H1 (cell line): ENCODE measurements at regions of chr11 and their contacts with region 1.

Region 1: DNA sequence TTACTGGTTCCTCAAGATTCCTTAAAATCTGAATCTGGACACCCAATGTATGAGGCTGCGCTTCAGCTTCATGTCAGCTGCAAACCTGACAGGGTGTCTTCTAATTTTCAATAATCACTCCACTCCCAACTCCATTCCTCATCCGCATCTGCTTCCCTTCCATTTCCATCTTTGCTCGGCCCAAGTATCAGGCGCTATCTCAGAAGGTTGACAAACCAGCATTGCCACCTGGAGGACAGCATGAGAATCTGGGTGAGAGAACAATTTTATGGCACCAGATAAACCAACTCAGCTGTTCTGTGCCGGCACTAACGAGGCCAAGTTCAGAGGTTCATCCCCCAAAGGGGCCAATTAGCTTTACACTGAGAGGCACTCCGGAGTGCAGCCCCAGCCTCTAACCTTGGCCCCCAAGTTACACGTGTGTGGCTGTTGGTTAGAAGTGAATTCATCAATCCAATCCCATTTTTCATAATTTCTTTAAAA is 79.1 kb upstream of the LMO2 start:
- DNase-seq: peak in 1 of 2 experiments; percentile 53
- H3K4me3 ChIP-seq: no peak overlapping the region
- H3K27ac ChIP-seq: no peak overlapping the region
- H3K4me1 ChIP-seq: no peaks in the 10 kb centered on the region
- H3K27me3 ChIP-seq: no peaks in the 10 kb centered on the region
- CTCF ChIP-seq: peak; percentile 31 to 94 (median 80)
- EP300 ChIP-seq: no peak
- POLR2A ChIP-seq: no peak
- RAD21 ChIP-seq: peak; percentile 96 to 97

Region 2: GRCh38 chr11:33808228-33808828 is 162.7 kb before region 1 on chr11:
- CTCF ChIA-PET with region 1: interaction called, 29 read pairs
- POLR2A ChIA-PET with region 1: no interaction called
- DNase-seq: peak; percentile 80 to 99
- H3K4me3 ChIP-seq: no peak overlapping the region
- H3K27ac ChIP-seq: no peak overlapping the region
- H3K4me1 ChIP-seq: no peaks in the 10 kb centered on the region
- H3K27me3 ChIP-seq: no peaks in the 10 kb centered on the region
- CTCF ChIP-seq: peak; percentile 84 to 89 (median 85)
- EP300 ChIP-seq: no peak
- POLR2A ChIP-seq: no peak
- RAD21 ChIP-seq: peak; percentile 91 to 92

Region 3: DNA sequence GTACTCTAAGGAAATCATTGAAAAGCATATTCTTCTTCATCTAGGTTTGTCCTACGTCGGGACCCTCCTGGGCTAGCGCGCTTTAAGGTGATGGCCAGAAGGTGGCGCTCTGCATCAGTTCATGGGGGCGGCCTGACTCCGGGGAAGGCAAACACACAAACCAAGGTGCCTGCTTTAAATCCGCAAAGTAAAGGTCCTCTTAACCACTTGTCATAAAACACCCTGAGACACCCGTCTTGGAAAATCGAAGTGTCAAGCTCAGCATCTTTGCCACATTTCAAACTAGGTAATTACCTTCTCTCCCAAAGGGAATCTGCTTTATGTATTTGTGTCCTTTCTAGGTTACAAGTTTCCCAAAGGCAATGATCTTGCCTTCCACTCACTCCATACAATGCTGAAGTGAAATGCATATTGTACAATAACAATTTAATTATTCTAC is 113.1 kb before region 1 on chr11:
- CTCF ChIA-PET with region 1: interaction called, 326 read pairs
- POLR2A ChIA-PET with region 1: no interaction called
- DNase-seq: peak; percentile 59 to 92
- H3K4me3 ChIP-seq: no peak overlapping the region
- H3K27ac ChIP-seq: no peak overlapping the region
- H3K4me1 ChIP-seq: peaks cover 0 to 4% (median under 1%) of the 10 kb centered on the region in 4 experiments; a peak in 2 of 7 replicates
- H3K27me3 ChIP-seq: peaks cover 0 to 3% (median 0%) of the 10 kb centered on the region in 4 experiments; a peak in 1 of 7 replicates
- CTCF ChIP-seq: peak; percentile 91 to 96 (median 91)
- EP300 ChIP-seq: no peak
- POLR2A ChIP-seq: no peak
- RAD21 ChIP-seq: peak; percentile 98

Region 4: DNA sequence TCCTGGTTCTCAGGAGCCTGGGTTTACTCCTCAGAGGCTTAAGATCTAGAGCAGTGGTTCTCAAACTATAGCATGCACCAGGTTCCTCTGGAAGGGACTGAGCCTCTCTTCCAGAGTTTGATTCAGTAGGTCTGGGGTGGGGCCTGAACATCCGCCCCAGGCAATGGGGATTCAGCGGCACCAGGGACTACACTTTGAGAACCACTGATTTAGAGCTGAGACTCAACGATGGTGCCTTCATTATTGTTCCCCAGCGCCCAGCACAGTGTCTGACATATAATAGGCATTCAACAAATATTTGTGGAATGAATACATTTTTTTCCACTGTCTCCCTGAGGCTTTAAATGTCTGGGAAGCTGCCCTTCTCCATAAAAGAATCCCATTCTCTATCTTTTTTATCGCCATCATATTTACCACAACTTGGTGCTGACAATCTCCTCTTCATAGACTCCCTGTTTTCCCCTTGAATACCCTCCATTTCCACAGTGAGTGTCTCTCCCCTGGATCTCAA is 55.6 kb before region 1 on chr11:
- CTCF ChIA-PET with region 1: no interaction called
- POLR2A ChIA-PET with region 1: no interaction called
- DNase-seq: no peak
- H3K4me3 ChIP-seq: no peak overlapping the region
- H3K27ac ChIP-seq: no peak overlapping the region
- H3K4me1 ChIP-seq: peaks cover 0 to 5% (median 0%) of the 10 kb centered on the region in 4 experiments; a peak in 1 of 7 replicates
- H3K27me3 ChIP-seq: no peaks in the 10 kb centered on the region
- CTCF ChIP-seq: no peak
- EP300 ChIP-seq: no peak
- POLR2A ChIP-seq: no peak
- RAD21 ChIP-seq: no peak

Region 5: GRCh38 chr11:33942954-33943353 is 28.1 kb before region 1 on chr11:
- CTCF ChIA-PET with region 1: interaction called, 11 read pairs
- POLR2A ChIA-PET with region 1: interaction called, 3 read pairs
- DNase-seq: no peak
- H3K4me3 ChIP-seq: no peak overlapping the region
- H3K27ac ChIP-seq: no peak overlapping the region
- H3K4me1 ChIP-seq: no peaks in the 10 kb centered on the region
- H3K27me3 ChIP-seq: no peaks in the 10 kb centered on the region
- CTCF ChIP-seq: no peak
- EP300 ChIP-seq: no peak
- POLR2A ChIP-seq: no peak
- RAD21 ChIP-seq: no peak

Region 6: GRCh38 chr11:33959855-33960400 is 11.1 kb before region 1 on chr11:
- CTCF ChIA-PET with region 1: interaction called, 12 read pairs
- POLR2A ChIA-PET with region 1: no interaction called
- DNase-seq: no peak
- H3K4me3 ChIP-seq: no peak overlapping the region
- H3K27ac ChIP-seq: no peak overlapping the region
- H3K4me1 ChIP-seq: no peaks in the 10 kb centered on the region
- H3K27me3 ChIP-seq: no peaks in the 10 kb centered on the region
- CTCF ChIP-seq: no peak
- EP300 ChIP-seq: no peak
- POLR2A ChIP-seq: no peak
- RAD21 ChIP-seq: no peak